HepG2 (cell line): ENCODE measurements at regions of chr1 and their contacts with region 1.

Region 1: DNA sequence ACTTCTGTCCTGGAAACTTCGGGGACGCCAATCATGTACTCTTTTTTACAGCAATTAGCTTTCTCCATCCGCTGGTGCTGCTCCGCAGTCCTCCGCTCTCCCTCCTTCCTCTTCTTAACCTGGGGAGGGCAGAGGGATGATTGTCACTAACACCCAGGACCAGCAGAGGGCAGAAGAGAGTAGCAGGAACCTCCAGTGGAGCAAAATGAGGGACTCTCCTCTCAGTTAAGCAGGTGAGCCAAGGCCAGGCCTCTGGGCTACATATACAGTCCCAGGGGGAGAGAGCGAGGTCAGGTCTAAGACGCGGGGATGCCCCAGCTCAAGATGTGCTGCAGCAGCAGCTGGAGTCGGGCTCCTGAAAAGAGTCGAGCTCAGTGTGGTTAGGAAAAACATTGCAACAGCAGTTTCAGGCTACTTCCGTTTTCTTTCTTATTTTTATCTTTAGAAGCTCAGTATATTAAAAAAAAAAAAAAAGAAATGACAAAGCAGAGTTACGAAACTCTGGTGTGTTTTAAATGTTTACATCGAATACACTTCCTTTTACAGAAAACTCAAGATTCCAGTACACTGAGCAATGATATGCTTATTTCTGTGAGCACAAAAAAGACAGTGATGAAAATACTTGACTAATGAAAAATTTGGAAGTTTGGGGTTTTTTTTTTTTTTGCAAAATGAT is 25.7 kb upstream of the NLRP3 start:
- DNase-seq: peak; percentile 65
- ATAC-seq: peak; percentile 98
- H3K4me3 ChIP-seq: no peak overlapping the region
- H3K27ac ChIP-seq: no peak overlapping the region
- H3K4me1 ChIP-seq: no peaks in the 10 kb centered on the region
- H3K27me3 ChIP-seq: peaks cover 1 to 16% of the 10 kb centered on the region in 2 experiments; a peak in 4 of 5 replicates
- CTCF ChIP-seq: peak; percentile 86
- EP300 ChIP-seq: no peak
- POLR2A ChIP-seq: no peak
- RAD21 ChIP-seq: peak; percentile 53

Region 2: DNA sequence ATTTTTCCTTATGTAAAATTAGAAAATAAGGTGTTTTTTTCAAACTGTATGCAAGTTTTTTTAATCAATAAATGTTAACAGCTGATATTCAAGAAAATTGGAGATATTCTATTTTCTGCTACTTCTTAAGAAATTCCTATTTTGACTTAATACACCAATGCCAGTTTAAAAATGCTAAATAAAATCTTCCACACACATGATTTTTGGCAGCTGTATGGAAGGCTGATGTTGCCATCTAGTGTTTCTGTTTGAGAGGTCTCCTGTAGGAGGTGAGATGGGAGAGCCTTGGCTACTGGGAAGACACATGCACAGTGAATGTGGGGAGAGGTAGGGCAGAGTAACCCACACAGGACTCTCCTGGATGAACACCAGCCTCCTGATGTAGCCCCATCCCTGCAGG is 96.8 kb after region 1 on chr1:
- CTCF ChIA-PET with region 1: interaction called, 10 read pairs
- POLR2A ChIA-PET with region 1: no interaction called
- in situ Hi-C with region 1: no loop called
- intact Hi-C with region 1: loop called (anchors 1 kb)
- DNase-seq: peak; percentile 20
- ATAC-seq: peak; percentile 85
- H3K4me3 ChIP-seq: no peak overlapping the region
- H3K27ac ChIP-seq: no peak overlapping the region
- H3K4me1 ChIP-seq: no peaks in the 10 kb centered on the region
- H3K27me3 ChIP-seq: no peaks in the 10 kb centered on the region; a peak in 2 of 5 replicates
- CTCF ChIP-seq: peak; percentile 62
- EP300 ChIP-seq: no peak
- POLR2A ChIP-seq: no peak
- RAD21 ChIP-seq: no peak

Region 3: DNA sequence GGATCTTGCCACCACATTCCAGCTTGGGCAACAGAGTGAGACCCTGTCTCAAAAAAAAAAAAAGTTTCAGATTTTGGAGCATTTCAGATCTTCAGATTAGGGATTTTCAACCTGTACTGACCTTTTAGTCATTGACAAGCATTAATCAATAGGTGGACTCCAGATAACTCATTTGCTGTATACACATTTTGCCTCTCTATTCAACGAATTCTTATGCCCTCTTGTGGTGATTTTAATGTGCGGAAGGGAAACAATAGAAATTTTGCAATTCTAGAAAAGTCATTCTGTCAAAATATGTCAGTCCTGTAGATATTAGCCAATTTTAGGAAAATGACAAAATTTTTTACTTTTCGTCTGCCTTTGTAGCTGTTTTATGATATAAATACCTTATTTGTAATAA is 186.2 kb after region 1 on chr1:
- CTCF ChIA-PET with region 1: interaction called, 11 read pairs
- POLR2A ChIA-PET with region 1: no interaction called
- in situ Hi-C with region 1: loop called (anchors 10 kb)
- intact Hi-C with region 1: loop called (anchors 1 kb)
- DNase-seq: peak; percentile 12
- ATAC-seq: peak; percentile 30; the same call in 1 of the 3 replicates
- H3K4me3 ChIP-seq: no peak overlapping the region
- H3K27ac ChIP-seq: no peak overlapping the region
- H3K4me1 ChIP-seq: no peaks in the 10 kb centered on the region
- H3K27me3 ChIP-seq: no peaks in the 10 kb centered on the region
- CTCF ChIP-seq: peak; percentile 55
- EP300 ChIP-seq: no peak
- POLR2A ChIP-seq: no peak
- RAD21 ChIP-seq: no peak